Activated CD8-positive, alpha-beta T cell treated with anti-CD3 and anti-CD28 coated beads for 36 hours (primary cell): ENCODE measurements at regions of chr1 and their contacts with region 1.

Region 1: DNA sequence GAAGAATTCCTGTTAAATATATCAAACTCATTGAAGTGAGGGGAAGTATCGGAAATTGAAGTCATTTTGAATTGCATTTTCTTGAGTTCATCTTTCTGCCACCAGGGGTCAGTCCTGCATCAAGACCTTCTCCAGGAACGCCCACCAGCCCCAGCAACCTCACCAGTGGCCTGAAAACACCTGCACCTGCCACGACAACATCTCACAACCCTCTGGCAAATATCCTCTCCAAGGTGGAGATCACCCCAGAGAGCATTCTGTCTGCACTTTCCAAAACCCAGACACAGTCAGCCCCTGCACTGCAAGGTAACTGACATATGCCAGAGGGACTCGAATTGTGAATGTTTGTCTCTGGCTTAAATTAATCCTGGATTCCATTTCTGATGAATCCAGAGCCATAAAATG is 22.8 kb upstream of the TARS2 start:
- DNase-seq: peak; percentile 87
- ATAC-seq: peak; percentile 85
- H3K4me3 Mint-ChIP-seq: no peak overlapping the region
- H3K27ac Mint-ChIP-seq: no peak overlapping the region
- H3K4me1 Mint-ChIP-seq: peaks cover 4% of the 10 kb centered on the region
- H3K27me3 Mint-ChIP-seq: no peaks in the 10 kb centered on the region
- CTCF ChIP-seq: peak; percentile 86

Region 2: GRCh38 chr1:150515328-150516048 is 51.1 kb after region 1 on chr1 and contains the start of gene FALEC:
- CTCF ChIA-PET with region 1: interaction called, 11 read pairs
- POLR2A ChIA-PET with region 1: no interaction called
- intact Hi-C with region 1: loop called (anchors 10 kb)
- DNase-seq: peak; percentile 92
- ATAC-seq: peak; percentile 100
- H3K4me3 Mint-ChIP-seq: peak within 1 kb of the TSS; percentile 92
- H3K27ac Mint-ChIP-seq: peak within 1 kb of the TSS; percentile 64
- H3K4me1 Mint-ChIP-seq: peaks cover 12% of the 10 kb centered on the region
- H3K27me3 Mint-ChIP-seq: no peaks in the 10 kb centered on the region
- CTCF ChIP-seq: no peak
- total RNA-seq, gene FALEC: not detected